Natural killer cell (primary cell): ENCODE measurements at regions of chr12 and their contacts with region 1.

Region 1: DNA sequence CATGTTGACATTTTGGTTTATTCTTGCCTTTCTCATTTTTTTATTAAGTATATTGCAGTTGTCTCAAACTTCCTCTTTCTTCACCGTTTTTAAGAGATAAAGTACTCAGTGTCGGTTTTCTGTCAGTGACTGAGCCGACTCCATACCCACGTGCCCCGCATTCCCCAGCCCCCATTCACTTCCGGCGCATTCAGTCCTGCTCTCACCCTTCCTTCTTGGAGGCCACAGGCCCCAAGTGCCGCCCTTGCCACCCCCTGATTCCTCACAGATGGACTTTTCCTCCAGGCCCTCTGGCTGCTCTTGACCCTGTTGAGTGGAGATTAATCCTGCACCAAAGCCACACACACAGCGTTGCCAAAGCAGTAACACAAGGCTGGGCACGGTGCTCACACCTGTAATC is 19.1 kb upstream of the DNAH10 start:
- DNase-seq: no peak
- ATAC-seq: peak in 1 of 3 donors; percentile 30
- H3K4me3 ChIP-seq: no peak overlapping the region
- H3K4me3 Mint-ChIP-seq: peak overlapping the region; percentile 88
- H3K27ac ChIP-seq: peak overlapping the region; percentile 40
- H3K27ac Mint-ChIP-seq: peak overlapping the region; percentile 89 to 96
- H3K4me1 ChIP-seq: peaks cover 21% of the 10 kb centered on the region
- H3K4me1 Mint-ChIP-seq: peaks cover 17 to 19% of the 10 kb centered on the region in 2 donors
- H3K27me3 ChIP-seq: no peaks in the 10 kb centered on the region
- H3K27me3 Mint-ChIP-seq: no peaks in the 10 kb centered on the region
- CTCF ChIP-seq: no peak

Region 2: GRCh38 chr12:123713398-123713797 is 29.6 kb before region 1 on chr12:
- intact Hi-C with region 1: loop called (anchors 2 kb)
- DNase-seq: peak in 1 of 2 donors; percentile 21
- ATAC-seq: no peak
- H3K4me3 ChIP-seq: no peak overlapping the region
- H3K4me3 Mint-ChIP-seq: peak overlapping the region; percentile 91
- H3K27ac ChIP-seq: no peak overlapping the region
- H3K27ac Mint-ChIP-seq: peak overlapping the region; percentile 78 to 88
- H3K4me1 ChIP-seq: peaks cover 24% of the 10 kb centered on the region
- H3K4me1 Mint-ChIP-seq: peaks cover 32 to 37% of the 10 kb centered on the region in 2 donors
- H3K27me3 ChIP-seq: no peaks in the 10 kb centered on the region
- H3K27me3 Mint-ChIP-seq: no peaks in the 10 kb centered on the region
- CTCF ChIP-seq: no peak

Region 3: GRCh38 chr12:123767613-123768012 is 24.6 kb after region 1 on chr12:
- intact Hi-C with region 1: loop called (anchors 1 kb)
- DNase-seq: peak; percentile 47 to 51
- ATAC-seq: peak; percentile 93 to 99 (median 95)
- H3K4me3 ChIP-seq: no peak overlapping the region
- H3K4me3 Mint-ChIP-seq: peak overlapping the region; percentile 26
- H3K27ac ChIP-seq: no peak overlapping the region
- H3K27ac Mint-ChIP-seq: peak overlapping the region in 1 of 2 donors; percentile 35
- H3K4me1 ChIP-seq: peaks cover 20% of the 10 kb centered on the region
- H3K4me1 Mint-ChIP-seq: peaks cover 8 to 14% of the 10 kb centered on the region in 2 donors
- H3K27me3 ChIP-seq: peaks cover 24% of the 10 kb centered on the region
- H3K27me3 Mint-ChIP-seq: peaks cover 24 to 27% of the 10 kb centered on the region in 2 donors
- CTCF ChIP-seq: no peak